Mammary epithelial cell (primary cell): ENCODE measurements at regions of chr5 and their contacts with region 1.

Region 1: GRCh38 chr5:73215891-73216610 is 43.1 kb downstream of the TMEM174 start:
- DNase-seq: peak; percentile 82
- H3K4me3 ChIP-seq: peak overlapping the region; percentile 52 to 63 (median 59)
- H3K27ac ChIP-seq: peak overlapping the region; percentile 28
- H3K4me1 ChIP-seq: peaks cover 11% of the 10 kb centered on the region
- H3K27me3 ChIP-seq: no peaks in the 10 kb centered on the region
- CTCF ChIP-seq: peak; percentile 52 to 80

Region 2: DNA sequence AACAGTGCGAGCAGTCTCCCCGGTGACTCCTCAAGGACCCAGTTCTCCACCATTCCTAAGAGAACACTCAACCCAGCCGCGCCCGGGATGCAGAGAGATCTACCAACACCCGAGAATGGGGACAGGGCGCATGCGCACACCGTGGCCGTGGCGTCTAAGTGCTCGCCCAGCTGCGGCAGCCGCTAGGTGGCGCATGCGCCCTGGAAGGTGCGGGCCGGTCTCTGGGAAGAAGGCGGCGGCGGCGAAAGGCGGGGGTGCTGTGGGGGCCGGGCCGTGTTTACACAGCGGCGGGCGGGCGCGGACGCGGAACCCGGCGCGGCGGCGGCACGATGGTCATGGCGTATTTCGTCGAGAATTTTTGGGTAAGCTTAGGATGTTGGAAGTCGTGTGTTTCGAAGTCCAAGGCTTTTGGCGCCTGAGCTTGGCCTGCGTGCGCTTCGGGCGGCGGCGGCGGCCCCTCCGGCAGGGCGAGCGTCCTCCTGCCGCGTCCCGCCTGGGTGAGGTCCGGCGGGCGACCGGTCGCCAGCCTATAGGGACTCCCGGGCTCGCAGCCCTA is 260.2 kb before region 1 on chr5 and contains the start of gene FCHO2:
- CTCF ChIA-PET with region 1: no interaction called
- dilution Hi-C with region 1: no loop called
- in situ Hi-C with region 1: no loop called
- intact Hi-C with region 1: loop called (anchors 5 kb)
- DNase-seq: peak; percentile 97
- H3K4me3 ChIP-seq: peak within 1 kb of the TSS; percentile 53 to 82 (median 77)
- H3K27ac ChIP-seq: peak within 1 kb of the TSS; percentile 98
- H3K4me1 ChIP-seq: peaks cover 24% of the 10 kb centered on the region
- H3K27me3 ChIP-seq: no peaks in the 10 kb centered on the region
- CTCF ChIP-seq: peak; percentile 58 to 85
- total RNA-seq, gene FCHO2: 15.5 to 25.5 TPM

Region 3: GRCh38 chr5:73093943-73094342 is 122.1 kb before region 1 on chr5:
- CTCF ChIA-PET with region 1: interaction called, 15 read pairs
- dilution Hi-C with region 1: no loop called
- in situ Hi-C with region 1: no loop called
- intact Hi-C with region 1: no loop called
- DNase-seq: peak; percentile 79
- H3K4me3 ChIP-seq: no peak overlapping the region
- H3K27ac ChIP-seq: no peak overlapping the region
- H3K4me1 ChIP-seq: peaks cover 11% of the 10 kb centered on the region
- H3K27me3 ChIP-seq: no peaks in the 10 kb centered on the region
- CTCF ChIP-seq: no peak

Region 4: DNA sequence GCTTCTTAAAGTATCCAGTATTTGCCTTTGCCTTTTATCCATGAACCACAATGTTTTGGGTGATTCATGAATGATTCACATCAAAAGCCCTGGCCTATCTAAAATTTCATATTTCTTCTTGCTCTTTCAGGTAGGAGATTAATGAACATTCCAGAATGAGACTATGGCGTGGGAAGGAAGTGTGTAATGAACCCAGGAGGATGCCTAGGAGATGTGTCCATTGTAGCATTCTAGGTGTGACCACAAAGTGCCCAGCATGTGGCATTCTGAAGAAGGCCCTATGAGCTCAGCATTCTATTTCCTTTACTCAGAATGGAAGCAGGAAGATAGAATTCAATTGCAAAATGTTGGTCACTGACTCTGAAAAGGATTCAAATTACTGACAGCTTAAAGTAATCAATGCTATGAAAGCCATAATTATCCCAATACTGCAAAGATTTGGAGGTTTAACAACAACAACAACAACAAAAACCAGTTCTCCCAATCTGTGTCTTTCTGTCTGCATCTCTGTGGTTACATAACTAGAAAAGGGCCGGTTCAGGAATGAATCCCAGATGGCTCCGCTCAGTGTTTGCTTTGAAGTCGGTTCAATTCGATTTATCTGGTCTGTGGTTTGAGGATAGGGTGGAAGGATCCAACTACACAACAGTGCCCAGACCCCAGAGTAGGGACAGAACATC is 105.8 kb after region 1 on chr5:
- CTCF ChIA-PET with region 1: interaction called, 6 read pairs
- dilution Hi-C with region 1: no loop called
- in situ Hi-C with region 1: no loop called
- intact Hi-C with region 1: loop called (anchors 5 kb)
- DNase-seq: peak; percentile 99
- H3K4me3 ChIP-seq: no peak overlapping the region
- H3K27ac ChIP-seq: peak overlapping the region; percentile 70
- H3K4me1 ChIP-seq: peaks cover 24% of the 10 kb centered on the region
- H3K27me3 ChIP-seq: no peaks in the 10 kb centered on the region
- CTCF ChIP-seq: no peak

Region 5: DNA sequence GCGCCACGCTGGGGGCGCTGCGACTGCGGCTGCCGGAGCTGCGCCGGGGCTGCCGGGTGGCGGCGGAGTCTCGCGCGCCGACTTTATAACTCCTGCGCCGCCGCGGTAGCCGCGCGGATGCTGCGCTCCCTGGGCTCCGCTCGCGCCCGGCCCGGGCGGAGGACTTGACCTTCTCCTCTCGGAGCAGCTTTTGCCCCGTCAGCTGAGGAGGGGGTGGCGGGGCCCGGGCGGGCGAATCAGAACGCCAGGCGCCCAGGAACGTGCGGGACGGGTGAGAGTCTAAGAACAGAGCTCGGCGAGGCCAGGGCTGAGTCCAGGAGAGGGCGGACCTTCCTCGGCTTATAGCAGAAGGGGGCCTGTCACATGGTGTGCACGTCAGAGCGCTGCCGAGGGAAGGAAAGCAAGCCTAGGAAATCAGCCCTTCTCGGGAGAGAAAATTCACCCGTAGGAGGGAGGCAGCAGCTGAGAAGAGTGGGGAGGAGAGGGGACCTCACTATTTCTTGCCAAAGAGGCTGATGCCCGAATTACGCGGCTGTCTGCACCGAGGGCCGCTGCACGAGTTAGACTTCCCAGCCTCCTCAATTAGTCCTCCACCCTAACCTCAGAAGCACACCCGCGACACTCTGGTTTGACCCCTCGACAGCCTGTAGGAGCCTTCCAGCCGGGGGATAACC is 232.5 kb after region 1 on chr5 and contains the start of gene FOXD1:
- CTCF ChIA-PET with region 1: interaction called, 9 read pairs
- dilution Hi-C with region 1: no loop called
- in situ Hi-C with region 1: loop called in 1 of 2 experiments (anchors 25 kb)
- intact Hi-C with region 1: loop called (anchors 1 kb)
- DNase-seq: peak; percentile 94
- H3K4me3 ChIP-seq: peak within 1 kb of the TSS; percentile 56 to 67 (median 59)
- H3K27ac ChIP-seq: peak within 1 kb of the TSS; percentile 39
- H3K4me1 ChIP-seq: peaks cover 29% of the 10 kb centered on the region
- H3K27me3 ChIP-seq: peaks cover 14% of the 10 kb centered on the region
- CTCF ChIP-seq: no peak
- total RNA-seq, gene FOXD1: 1.2 to 58.1 TPM

Region 6: DNA sequence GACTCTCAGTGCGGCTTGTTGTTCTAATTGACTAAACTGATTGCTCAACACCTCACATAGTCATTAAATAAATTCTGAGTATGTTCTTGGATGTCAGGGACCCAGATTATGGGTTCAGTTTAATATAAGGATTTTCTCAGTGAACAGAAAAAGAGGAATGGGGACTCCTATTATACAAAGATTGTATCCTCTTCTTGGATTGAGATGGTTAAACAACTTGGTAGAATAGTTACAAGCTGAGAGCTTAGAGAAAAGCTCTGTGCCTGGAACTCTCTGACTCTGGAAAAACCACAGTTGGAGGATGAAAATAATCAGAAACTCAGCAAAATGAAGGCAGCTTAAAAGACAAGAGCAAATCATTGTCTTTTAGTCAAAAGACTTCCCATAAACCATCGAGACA is 318.9 kb after region 1 on chr5:
- CTCF ChIA-PET with region 1: no interaction called
- dilution Hi-C with region 1: no loop called
- in situ Hi-C with region 1: no loop called
- intact Hi-C with region 1: loop called (anchors 5 kb)
- DNase-seq: no peak
- H3K4me3 ChIP-seq: no peak overlapping the region
- H3K27ac ChIP-seq: no peak overlapping the region
- H3K4me1 ChIP-seq: peaks cover 5% of the 10 kb centered on the region
- H3K27me3 ChIP-seq: no peaks in the 10 kb centered on the region
- CTCF ChIP-seq: no peak

Region 7: DNA sequence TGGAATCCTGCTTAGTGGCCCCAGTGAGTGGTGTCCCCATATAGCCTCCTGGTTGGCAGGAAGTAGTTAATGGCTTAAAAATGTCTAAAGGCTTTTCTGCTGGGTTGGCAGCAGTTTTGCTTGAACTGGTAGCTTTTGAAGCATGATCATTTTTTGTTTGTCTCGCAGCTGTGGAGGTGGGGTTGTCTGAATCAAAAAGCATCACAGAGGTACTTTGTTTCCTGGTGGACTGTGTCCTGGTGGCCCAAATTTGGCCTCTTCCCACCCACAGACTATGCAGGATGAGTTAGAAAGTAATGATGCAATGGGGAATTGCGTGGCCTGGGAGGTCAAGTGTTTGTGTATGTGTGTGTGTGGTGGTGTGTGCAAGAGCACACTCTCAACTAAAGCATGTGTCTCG is 732.7 kb after region 1 on chr5:
- CTCF ChIA-PET with region 1: no interaction called
- dilution Hi-C with region 1: no loop called
- in situ Hi-C with region 1: no loop called
- intact Hi-C with region 1: no loop called
- DNase-seq: peak; percentile 44
- H3K4me3 ChIP-seq: no peak overlapping the region
- H3K27ac ChIP-seq: no peak overlapping the region
- H3K4me1 ChIP-seq: peaks cover 10% of the 10 kb centered on the region
- H3K27me3 ChIP-seq: no peaks in the 10 kb centered on the region
- CTCF ChIP-seq: no peak